Ascending aorta (tissue), 2 donors: ENCODE measurements at regions of chr19 and their contacts with region 1.

Region 1: GRCh38 chr19:19776041-19777008 is 43.4 kb upstream of the ZNF14 start:
- DNase-seq: peak; percentile 97 to 100
- H3K4me3 ChIP-seq: peak overlapping the region; percentile 71 to 82
- H3K27ac ChIP-seq: peak overlapping the region; percentile 50 to 56
- H3K4me1 ChIP-seq: peaks cover 5 to 11% of the 10 kb centered on the region in 2 donors
- H3K27me3 ChIP-seq: no peaks in the 10 kb centered on the region
- CTCF ChIP-seq: no peak

Region 2: DNA sequence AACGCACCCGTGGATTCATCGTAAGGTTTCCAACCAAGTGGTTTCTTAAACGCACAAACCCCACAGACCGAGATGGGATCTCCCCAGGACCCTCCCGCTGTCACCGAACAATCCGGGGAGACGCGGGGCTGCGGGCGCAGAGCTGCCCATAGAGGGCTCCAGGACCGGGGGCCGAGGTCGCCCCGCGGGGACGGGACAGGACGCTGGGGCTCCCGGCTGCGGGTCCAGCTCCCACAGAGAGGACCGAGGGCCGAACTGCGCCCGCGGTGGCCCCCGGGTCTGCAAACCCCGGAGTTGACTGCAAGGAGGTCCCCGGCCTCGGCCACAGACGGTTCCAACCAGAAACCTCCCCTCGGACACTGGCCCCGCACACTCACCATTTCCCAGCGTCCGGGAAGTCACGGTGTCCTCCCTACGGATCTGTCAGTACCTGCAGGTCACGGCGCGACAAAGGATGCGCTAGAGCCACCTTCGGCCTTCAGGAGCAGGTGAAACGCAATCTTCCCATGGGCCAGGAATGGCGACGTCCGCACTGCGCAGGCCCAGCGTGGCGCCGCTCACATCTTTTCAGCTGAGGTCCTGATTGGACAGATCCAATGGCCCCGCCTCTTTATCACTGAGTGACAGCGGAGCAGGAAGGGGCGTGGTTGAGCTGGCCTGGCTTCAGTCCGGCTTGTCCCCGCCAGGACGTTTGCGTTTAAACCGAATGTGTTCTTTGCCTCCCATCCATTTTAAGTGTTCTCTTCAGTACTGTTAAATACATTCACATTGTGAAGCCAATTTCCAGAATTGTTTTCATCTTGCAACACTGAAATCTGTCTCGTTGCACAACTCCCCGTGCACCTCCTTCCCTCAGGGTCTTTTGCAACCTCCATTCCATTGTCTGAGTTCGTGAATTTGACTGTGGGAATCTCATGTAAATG is 43.5 kb before region 1 on chr19 and contains the start of gene ZNF14:
- intact Hi-C with region 1: loop called (anchors 5 kb)
- DNase-seq: peak; percentile 74 to 96
- H3K4me3 ChIP-seq: peak within 1 kb of the TSS; percentile 91 to 95
- H3K27ac ChIP-seq: peak within 1 kb of the TSS; percentile 72 to 79
- H3K4me1 ChIP-seq: no peaks in the 10 kb centered on the region
- H3K27me3 ChIP-seq: no peaks in the 10 kb centered on the region
- CTCF ChIP-seq: peak in 2 of 3 experiments; percentile 20 to 24
- total RNA-seq, gene ZNF14: 4.8 TPM

Region 3: GRCh38 chr19:20051841-20052768 is 275.8 kb after region 1 on chr19:
- intact Hi-C with region 1: loop called (anchors 10 kb)
- DNase-seq: peak; percentile 91 to 98
- H3K4me3 ChIP-seq: peak overlapping the region; percentile 74
- H3K27ac ChIP-seq: peak overlapping the region; percentile 75 to 76
- H3K4me1 ChIP-seq: no peaks in the 10 kb centered on the region
- H3K27me3 ChIP-seq: no peaks in the 10 kb centered on the region
- CTCF ChIP-seq: peak in 1 of 3 experiments; percentile 18